Activated CD4-positive, alpha-beta memory T cell treated with anti-CD3 and anti-CD28 coated beads, Interleukin-2, amount 10 ng/mL, durations not matched to agents 7 days and 5 days (primary cell): ENCODE measurements at regions of chr14 and their contacts with region 1.

Region 1: GRCh38 chr14:61475316-61475715 is 153.9 kb downstream of the PRKCH start:
- DNase-seq: no peak
- H3K4me3 Mint-ChIP-seq: no peak overlapping the region
- H3K27ac Mint-ChIP-seq: peak overlapping the region; percentile 89
- H3K4me1 Mint-ChIP-seq: peaks cover 95% of the 10 kb centered on the region
- H3K27me3 Mint-ChIP-seq: no peaks in the 10 kb centered on the region

Region 2: GRCh38 chr14:61326847-61327246 is 148.5 kb before region 1 on chr14:
- CTCF ChIA-PET with region 1: interaction called, 4 read pairs
- POLR2A ChIA-PET with region 1: interaction called, 25 read pairs
- DNase-seq: no peak
- H3K4me3 Mint-ChIP-seq: peak overlapping the region; percentile 87
- H3K27ac Mint-ChIP-seq: peak overlapping the region; percentile 92
- H3K4me1 Mint-ChIP-seq: peaks cover 63% of the 10 kb centered on the region
- H3K27me3 Mint-ChIP-seq: no peaks in the 10 kb centered on the region

Region 3: GRCh38 chr14:61461808-61462275 is 13.5 kb before region 1 on chr14:
- CTCF ChIA-PET with region 1: interaction called, 12 read pairs
- POLR2A ChIA-PET with region 1: interaction called, 4 read pairs
- DNase-seq: no peak
- H3K4me3 Mint-ChIP-seq: no peak overlapping the region
- H3K27ac Mint-ChIP-seq: peak overlapping the region; percentile 81
- H3K4me1 Mint-ChIP-seq: peaks cover 56% of the 10 kb centered on the region
- H3K27me3 Mint-ChIP-seq: no peaks in the 10 kb centered on the region

Region 4: DNA sequence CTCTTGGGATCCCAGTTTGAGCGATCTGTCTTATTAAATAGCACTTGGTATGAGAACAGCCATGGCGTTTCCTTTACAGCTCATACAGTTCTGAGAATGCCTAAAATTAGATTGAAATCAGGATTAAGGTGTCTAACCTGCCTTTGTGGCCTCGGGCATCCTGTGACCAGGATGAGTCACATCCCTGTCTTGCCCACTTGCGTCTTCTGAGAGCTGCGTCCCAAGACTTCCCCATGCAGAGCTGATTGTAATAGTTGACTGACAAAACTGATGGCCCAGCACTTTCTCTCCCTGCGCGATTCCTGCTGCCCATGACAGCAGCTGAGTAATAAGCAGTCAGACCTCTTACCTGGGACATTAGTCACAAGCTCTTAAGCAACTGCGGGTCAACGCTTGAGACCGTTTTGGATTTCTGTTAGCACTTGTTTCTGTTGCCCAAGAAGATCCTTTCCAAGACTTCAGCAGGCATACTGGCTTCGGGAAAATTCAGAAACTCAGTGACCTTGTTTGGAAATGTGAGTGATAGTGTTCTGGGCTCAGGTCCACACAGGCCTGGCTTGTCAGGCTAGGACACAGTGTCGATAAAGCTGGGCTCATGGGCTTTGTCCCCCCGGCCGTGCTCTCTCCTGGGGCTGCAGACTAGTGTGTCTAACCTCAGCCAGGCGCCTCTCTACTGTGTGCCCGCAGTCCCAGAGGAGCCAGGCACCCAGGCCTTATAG is 50.1 kb after region 1 on chr14:
- CTCF ChIA-PET with region 1: interaction called, 9 read pairs
- POLR2A ChIA-PET with region 1: interaction called, 80 read pairs
- DNase-seq: peak; percentile 87
- H3K4me3 Mint-ChIP-seq: peak overlapping the region; percentile 40
- H3K27ac Mint-ChIP-seq: peak overlapping the region; percentile 72
- H3K4me1 Mint-ChIP-seq: peaks cover 82% of the 10 kb centered on the region
- H3K27me3 Mint-ChIP-seq: no peaks in the 10 kb centered on the region

Region 5: GRCh38 chr14:61538464-61539304 is 63.4 kb after region 1 on chr14:
- CTCF ChIA-PET with region 1: no interaction called
- POLR2A ChIA-PET with region 1: no interaction called
- DNase-seq: no peak
- H3K4me3 Mint-ChIP-seq: no peak overlapping the region
- H3K27ac Mint-ChIP-seq: no peak overlapping the region
- H3K4me1 Mint-ChIP-seq: peaks cover 58% of the 10 kb centered on the region
- H3K27me3 Mint-ChIP-seq: no peaks in the 10 kb centered on the region

Region 6: DNA sequence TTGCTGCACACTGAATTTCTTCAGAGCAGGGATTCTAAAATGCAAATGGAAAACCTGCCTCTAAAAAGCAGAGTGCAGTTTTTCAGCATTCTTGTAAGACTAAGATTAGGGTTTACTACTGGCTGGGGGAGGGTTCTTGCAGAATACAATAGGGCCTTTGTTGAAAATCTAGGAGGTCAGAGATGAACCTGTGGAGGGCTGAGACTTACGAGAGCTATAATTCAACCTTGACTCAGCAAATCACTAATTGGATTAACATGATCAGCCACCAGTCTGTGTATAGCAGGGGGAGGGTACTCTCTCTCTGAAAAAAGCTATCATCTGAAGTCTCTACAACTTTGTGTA is 127.4 kb after region 1 on chr14:
- CTCF ChIA-PET with region 1: no interaction called
- POLR2A ChIA-PET with region 1: no interaction called
- DNase-seq: no peak
- H3K4me3 Mint-ChIP-seq: no peak overlapping the region
- H3K27ac Mint-ChIP-seq: no peak overlapping the region
- H3K4me1 Mint-ChIP-seq: peaks cover 22% of the 10 kb centered on the region
- H3K27me3 Mint-ChIP-seq: no peaks in the 10 kb centered on the region

Region 7: DNA sequence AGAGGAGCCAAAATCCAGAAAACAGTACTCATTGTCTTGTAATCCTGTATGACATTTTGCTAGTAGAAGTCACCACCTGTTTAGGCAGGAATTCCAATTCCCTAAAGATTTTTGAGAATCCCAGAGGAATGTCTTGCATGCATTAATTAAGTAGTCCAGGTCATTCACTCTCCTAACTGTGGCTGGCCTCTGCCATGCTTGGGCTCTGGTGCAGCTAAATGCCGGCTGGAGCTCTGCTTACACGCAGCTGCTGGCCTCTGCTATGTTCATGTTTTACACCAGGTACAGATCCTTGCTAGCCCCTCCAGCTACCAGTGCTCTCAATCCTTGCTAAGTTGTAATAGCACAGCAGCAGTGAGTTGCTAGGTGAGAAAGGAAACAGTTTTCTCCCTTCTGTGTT is 203.7 kb after region 1 on chr14:
- CTCF ChIA-PET with region 1: no interaction called
- POLR2A ChIA-PET with region 1: no interaction called
- DNase-seq: no peak
- H3K4me3 Mint-ChIP-seq: no peak overlapping the region
- H3K27ac Mint-ChIP-seq: no peak overlapping the region
- H3K4me1 Mint-ChIP-seq: peaks cover 2% of the 10 kb centered on the region
- H3K27me3 Mint-ChIP-seq: peaks cover 18% of the 10 kb centered on the region

Region 8: GRCh38 chr14:61694830-61695694 is 219.7 kb after region 1 on chr14 and contains the start of gene HIF1A:
- CTCF ChIA-PET with region 1: interaction called, 10 read pairs
- POLR2A ChIA-PET with region 1: interaction called, 61 read pairs
- DNase-seq: peak; percentile 97
- H3K4me3 Mint-ChIP-seq: peak within 1 kb of the TSS; percentile 95
- H3K27ac Mint-ChIP-seq: peak within 1 kb of the TSS; percentile 93
- H3K4me1 Mint-ChIP-seq: peaks cover 54% of the 10 kb centered on the region
- H3K27me3 Mint-ChIP-seq: no peaks in the 10 kb centered on the region
- total RNA-seq, gene HIF1A: 153 to 158 TPM

Region 9: GRCh38 chr14:61837336-61838229 is 362.3 kb after region 1 on chr14:
- CTCF ChIA-PET with region 1: interaction called, 37 read pairs
- POLR2A ChIA-PET with region 1: interaction called, 3 read pairs
- DNase-seq: peak; percentile 81
- H3K4me3 Mint-ChIP-seq: no peak overlapping the region
- H3K27ac Mint-ChIP-seq: no peak overlapping the region
- H3K4me1 Mint-ChIP-seq: peaks cover 5% of the 10 kb centered on the region
- H3K27me3 Mint-ChIP-seq: peaks cover 22% of the 10 kb centered on the region